Activated naive CD8-positive, alpha-beta T cell treated with anti-CD3 and anti-CD28 coated beads, Interleukin-2, amount 10 ng/mL, durations not matched to agents 7 days and 5 days (primary cell): ENCODE measurements at regions of chr6 and their contacts with region 1.

Region 1: DNA sequence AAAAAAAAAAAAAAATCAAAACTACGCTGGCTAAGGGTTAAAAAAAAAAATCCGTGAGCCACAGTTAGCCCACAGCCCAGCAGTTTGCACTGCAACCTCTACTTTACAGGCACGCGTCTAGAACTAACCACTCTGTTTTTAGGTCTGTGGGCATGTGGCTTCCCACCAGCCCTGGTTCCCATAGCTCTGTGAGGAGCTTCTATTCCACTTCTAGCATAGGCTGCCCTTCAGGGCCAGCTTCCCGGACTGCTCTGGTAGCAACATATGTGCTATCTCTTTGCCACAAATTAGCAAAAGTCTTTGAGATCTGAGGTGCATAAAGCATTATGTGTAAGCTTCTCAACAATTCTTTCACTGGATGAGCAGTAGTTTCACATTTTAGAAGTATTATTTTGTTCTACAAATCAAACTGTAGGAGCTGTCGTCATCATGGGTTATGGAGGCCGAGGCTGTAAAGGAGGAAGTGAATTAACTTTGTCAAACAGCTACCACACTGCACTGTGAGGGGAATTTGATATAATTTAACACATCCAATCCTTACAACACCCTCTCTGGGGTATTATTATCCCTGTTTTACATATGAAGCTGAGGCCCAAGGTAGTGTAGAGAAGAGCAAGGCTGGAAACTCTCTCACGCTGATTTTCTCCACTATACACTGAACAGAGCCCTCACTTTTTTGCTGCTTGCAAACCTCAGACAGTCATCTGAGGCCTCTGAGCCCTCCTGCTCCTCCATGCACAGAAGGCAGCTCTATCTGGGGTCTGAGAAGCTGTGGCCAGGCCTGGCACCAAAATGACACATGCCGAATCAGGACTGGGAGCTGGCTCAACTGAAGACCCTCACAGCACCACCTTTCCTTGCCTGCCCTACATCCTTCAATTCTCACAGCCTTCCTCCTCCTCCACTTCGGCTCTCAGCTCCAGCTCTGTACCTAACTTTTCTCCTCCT is 35.4 kb downstream of the MAN1A1 start:
- DNase-seq: peak; percentile 72
- ATAC-seq: peak; percentile 69
- H3K4me3 Mint-ChIP-seq: peak overlapping the region; percentile 73
- H3K27ac Mint-ChIP-seq: peak overlapping the region; percentile 92
- H3K4me1 Mint-ChIP-seq: peaks cover 63% of the 10 kb centered on the region
- H3K27me3 Mint-ChIP-seq: no peaks in the 10 kb centered on the region

Region 2: DNA sequence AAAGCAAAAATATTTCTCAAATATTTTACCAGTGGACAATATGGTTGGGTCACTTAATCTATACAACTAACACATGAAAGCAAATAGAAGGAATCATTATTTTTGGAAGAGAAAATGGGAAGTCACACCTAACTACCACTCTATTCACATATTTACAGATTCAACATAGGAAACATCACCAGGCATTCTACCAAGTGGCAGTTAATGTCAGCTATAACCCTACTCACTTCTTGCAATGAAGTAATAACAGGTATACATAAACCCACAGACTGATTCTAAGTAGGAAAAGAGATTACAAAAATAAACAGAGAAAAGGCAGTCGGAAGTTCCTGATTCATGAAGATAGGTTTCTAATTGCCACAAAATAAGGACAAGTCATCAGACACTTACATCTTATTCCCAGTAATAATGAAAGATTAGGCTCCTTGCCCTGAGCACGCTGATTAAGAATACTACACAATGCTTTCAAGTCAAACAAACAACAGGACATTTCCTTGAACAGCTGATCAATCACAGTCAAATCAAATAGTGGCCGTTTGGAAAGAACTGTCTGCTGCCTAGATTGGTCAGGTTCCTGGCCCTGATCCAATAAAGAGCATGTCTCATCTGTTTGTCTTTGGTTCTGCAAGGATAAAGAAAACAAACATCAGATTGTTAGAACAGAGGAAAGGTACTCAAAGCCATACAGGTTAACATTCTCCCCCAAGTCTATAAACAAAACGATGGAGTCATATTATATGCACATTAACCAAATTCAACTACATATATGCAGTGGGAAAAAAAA is 845.3 kb before region 1 on chr6:
- POLR2A ChIA-PET with region 1: no interaction called
- DNase-seq: no peak
- ATAC-seq: no peak
- H3K4me3 Mint-ChIP-seq: no peak overlapping the region
- H3K27ac Mint-ChIP-seq: no peak overlapping the region
- H3K4me1 Mint-ChIP-seq: no peaks in the 10 kb centered on the region
- H3K27me3 Mint-ChIP-seq: no peaks in the 10 kb centered on the region

Region 3: DNA sequence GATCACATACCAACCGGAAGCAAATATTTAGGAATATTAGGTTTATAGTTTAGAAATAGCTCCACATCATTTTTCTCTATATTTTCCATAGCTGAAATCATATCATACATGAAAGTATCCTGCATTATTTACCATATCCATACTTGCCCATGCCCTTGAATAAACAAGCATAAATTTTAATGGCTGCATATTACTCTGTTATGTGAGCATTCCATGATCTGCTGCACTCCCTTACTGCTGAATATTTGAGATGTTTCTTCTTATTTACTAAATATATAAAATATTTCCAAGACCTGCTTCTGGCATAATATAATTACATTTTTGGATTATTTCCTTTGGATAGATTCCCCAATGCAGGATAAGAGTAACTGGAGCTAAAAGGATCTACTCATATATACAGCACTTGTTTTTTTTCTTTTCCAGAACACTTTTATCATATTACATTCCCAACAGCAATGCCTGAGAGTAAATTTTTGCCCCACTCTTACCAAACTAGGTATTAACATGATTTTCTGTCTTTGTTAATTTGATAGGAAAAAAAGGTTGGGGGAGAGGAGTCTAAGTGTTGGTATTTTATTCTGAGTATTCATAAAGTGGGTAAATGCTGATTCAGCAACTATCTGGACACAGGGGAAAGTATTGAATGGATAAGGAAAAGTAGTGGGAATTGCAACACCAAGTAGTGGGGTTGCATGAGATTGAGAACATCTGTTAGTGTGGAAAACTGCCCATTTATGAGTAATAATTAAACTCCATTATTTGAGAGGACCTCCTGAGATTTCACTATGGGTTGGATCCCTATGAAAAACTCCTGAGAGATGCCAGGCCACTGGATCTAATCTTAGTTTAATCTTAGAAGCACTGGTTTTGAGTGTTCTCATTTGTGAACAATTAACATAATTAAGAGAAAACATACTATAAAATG is 40.7 kb before region 1 on chr6:
- POLR2A ChIA-PET with region 1: no interaction called
- DNase-seq: no peak
- ATAC-seq: no peak
- H3K4me3 Mint-ChIP-seq: no peak overlapping the region
- H3K27ac Mint-ChIP-seq: no peak overlapping the region
- H3K4me1 Mint-ChIP-seq: peaks cover 3% of the 10 kb centered on the region
- H3K27me3 Mint-ChIP-seq: no peaks in the 10 kb centered on the region

Region 4: DNA sequence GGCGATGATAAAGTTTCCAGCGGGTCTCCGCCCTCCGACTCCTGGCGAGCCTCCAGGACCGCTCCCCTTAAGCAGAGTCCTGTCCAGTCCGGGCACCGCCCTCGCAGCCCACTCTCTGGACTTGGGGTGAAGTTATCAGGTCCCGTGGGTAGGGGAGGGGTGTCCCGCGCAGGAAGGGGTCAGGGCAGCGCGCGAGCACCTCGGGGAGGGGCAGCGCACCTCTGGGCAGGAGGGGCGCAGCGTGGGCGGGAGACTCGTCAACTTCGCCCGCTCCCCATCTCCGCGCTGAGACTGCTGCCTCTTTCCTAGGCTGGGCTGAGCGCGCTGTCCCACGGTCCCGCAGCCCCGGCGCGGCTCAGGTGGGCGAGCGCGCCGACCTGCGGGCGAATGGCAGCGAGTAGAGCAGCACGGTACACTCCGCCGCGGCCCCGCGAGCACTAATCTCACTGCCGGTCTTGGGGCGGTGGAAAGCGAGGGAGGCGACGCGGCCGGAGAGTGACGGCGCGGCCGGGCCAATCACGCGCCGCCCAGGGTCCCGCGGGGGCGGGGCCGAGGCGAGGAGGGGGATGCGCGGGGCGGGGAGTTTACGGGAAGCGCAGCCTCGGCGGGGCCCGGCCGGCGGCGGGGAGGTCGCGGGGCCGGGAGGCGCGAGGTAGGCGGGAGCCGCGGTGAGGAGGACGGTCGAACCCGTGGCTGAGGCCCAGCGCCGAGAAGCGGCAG is 35.3 kb after region 1 on chr6 and contains the start of gene MAN1A1:
- POLR2A ChIA-PET with region 1: interaction called, 38 read pairs
- DNase-seq: peak; percentile 97
- ATAC-seq: peak; percentile 88
- H3K4me3 Mint-ChIP-seq: peak within 1 kb of the TSS; percentile 96
- H3K27ac Mint-ChIP-seq: peak within 1 kb of the TSS; percentile 88
- H3K4me1 Mint-ChIP-seq: peaks cover 39% of the 10 kb centered on the region
- H3K27me3 Mint-ChIP-seq: peaks cover 2% of the 10 kb centered on the region
- total RNA-seq, gene MAN1A1: 19.2 to 19.5 TPM

Region 5: DNA sequence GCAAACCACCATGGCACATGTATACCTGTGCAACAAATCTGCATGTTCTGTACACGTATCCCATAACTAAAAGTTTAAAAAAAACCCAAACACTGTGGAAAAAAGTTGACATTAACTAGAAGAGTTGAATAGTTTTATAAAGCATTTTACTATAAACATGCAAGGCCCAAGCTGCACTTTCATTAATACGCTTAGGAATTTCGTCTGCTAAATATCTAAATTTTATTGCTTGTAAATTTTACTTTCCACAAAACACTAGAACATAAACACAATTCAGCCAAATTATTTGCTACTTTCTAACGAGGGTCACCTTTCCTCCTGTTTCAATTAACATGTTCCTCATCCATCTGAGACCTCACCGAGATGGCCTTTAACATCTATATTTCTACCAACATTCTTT is 109.8 kb after region 1 on chr6:
- POLR2A ChIA-PET with region 1: no interaction called
- DNase-seq: no peak
- ATAC-seq: no peak
- H3K4me3 Mint-ChIP-seq: no peak overlapping the region
- H3K27ac Mint-ChIP-seq: no peak overlapping the region
- H3K4me1 Mint-ChIP-seq: no peaks in the 10 kb centered on the region
- H3K27me3 Mint-ChIP-seq: no peaks in the 10 kb centered on the region

Region 6: DNA sequence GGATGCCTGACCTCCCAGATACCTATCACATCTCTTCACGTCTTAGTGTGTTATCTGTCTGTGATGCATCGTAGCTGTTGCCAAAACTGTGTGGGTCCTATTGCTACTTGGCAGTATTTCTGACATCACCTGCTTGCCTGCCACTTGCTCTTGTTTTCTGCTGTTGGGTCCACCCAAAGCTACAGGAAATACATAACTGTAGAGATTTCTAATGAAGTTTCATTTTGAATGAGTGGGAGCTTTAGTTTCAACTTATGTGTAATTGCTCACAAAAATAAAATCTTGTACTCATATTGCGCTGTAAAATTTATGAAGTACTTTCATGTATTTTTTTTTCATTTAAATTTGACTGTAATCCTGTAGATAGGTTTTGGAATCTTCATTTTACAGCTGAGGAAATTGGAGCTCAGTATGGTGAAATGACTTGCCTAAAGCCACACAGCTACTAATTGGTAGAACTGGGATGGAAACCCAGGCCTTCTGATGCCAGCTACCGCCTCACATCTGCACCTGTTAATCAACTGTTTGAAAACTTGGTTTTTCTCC is 148.9 kb after region 1 on chr6:
- POLR2A ChIA-PET with region 1: no interaction called
- DNase-seq: no peak
- ATAC-seq: peak; percentile 86
- H3K4me3 Mint-ChIP-seq: no peak overlapping the region
- H3K27ac Mint-ChIP-seq: peak overlapping the region; percentile 78
- H3K4me1 Mint-ChIP-seq: peaks cover 20% of the 10 kb centered on the region
- H3K27me3 Mint-ChIP-seq: no peaks in the 10 kb centered on the region